Endothelial cell of umbilical vein (primary cell): ENCODE measurements at regions of chr1 and their contacts with region 1.

Region 1: DNA sequence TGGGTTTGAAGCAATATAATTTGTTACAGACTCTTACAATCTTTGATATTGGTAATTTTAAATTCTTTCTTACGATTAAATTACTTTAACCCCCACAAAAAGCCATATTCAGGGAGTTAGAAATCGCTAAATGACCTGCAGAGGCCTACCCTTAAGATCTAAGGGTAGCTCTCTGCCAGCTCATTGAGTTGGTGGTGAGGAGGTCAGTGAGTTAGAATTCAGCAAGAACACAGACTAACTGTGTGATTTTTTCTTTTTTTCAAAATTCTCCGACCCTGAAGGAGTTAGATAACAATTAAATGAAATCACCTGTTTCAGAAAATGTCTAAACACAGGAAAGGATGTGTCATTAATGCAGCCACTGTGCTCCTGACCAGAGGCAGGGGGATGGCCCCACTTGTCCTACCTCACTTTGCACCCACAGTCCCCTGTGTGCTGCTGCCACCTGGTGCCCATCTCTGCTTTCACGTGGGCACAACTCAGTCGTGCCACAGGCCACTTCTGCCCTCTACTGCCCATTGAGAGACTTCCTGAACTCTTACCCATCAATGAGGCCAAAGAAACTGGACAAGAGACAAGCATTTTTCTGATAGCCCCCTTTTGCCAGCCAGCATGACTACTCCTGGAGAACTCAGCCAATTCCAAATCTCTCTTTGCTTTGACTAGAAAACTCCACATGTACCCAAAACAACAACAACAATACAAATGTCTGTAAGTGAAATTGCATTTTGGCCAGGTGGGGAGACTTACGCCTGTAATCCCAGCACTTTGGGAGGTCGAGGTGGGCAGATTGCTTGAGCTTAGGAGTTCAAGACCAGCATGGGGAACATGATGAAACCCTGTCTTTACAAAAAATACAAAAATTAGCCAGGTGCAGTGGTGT is 8.4 kb downstream of the CFAP45 start:
- DNase-seq: peak; percentile 95
- H3K4me3 ChIP-seq: no peak overlapping the region
- H3K27ac ChIP-seq: peak overlapping the region; percentile 27
- H3K4me1 ChIP-seq: peaks cover 21% of the 10 kb centered on the region
- H3K27me3 ChIP-seq: no peaks in the 10 kb centered on the region
- CTCF ChIP-seq: peak; percentile 97 to 99
- POLR2A ChIP-seq: no peak

Region 2: DNA sequence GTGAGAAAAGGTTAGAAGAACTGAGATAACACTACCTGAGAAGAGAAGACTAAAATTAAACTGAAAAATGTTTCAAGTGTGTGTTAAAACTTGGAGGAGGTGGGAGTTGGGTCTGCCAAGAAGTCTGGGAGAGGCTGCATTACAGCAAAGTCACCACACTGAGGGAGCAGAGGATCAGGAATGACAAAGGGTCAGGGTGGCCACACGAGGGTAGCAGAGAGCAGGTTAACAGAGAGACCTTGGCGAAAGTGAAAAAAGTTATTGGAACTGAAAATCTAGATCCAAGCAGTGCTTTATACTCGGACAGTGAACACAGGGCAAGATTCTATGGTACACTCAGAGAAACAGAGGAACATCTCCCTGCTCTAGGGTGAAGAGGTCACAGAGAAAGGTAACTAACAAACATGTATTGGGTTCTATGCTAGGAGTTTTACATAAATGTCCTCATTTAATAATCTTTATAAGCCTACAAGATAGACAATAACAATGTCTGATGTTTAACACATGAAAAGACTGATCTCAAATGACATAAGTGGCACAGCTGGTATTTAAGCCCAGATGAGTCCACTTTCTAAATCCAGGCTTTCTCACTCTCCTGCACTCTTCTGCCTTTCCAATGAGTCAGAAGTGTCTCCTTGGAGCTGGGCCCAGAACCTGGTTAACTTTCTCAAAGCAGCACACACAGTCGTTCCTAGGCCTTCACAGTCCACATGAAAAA is 730.4 kb before region 1 on chr1:
- CTCF ChIA-PET with region 1: interaction called, 85 read pairs
- POLR2A ChIA-PET with region 1: no interaction called
- dilution Hi-C with region 1: no loop called
- intact Hi-C with region 1: loop called (anchors 1 kb)
- DNase-seq: peak; percentile 86
- H3K4me3 ChIP-seq: no peak overlapping the region
- H3K27ac ChIP-seq: no peak overlapping the region
- H3K4me1 ChIP-seq: peaks cover 7% of the 10 kb centered on the region
- H3K27me3 ChIP-seq: peaks cover 5 to 10% of the 10 kb centered on the region in 2 experiments
- CTCF ChIP-seq: peak; percentile 96 to 99
- POLR2A ChIP-seq: peak; percentile 25

Region 3: GRCh38 chr1:159469921-159470533 is 421.5 kb before region 1 on chr1:
- CTCF ChIA-PET with region 1: no interaction called
- POLR2A ChIA-PET with region 1: no interaction called
- dilution Hi-C with region 1: no loop called
- intact Hi-C with region 1: loop called (anchors 2 kb)
- DNase-seq: peak; percentile 79
- H3K4me3 ChIP-seq: no peak overlapping the region
- H3K27ac ChIP-seq: peak overlapping the region; percentile 78
- H3K4me1 ChIP-seq: peaks cover 50% of the 10 kb centered on the region
- H3K27me3 ChIP-seq: no peaks in the 10 kb centered on the region
- CTCF ChIP-seq: no peak
- POLR2A ChIP-seq: peak; percentile 25

Region 4: DNA sequence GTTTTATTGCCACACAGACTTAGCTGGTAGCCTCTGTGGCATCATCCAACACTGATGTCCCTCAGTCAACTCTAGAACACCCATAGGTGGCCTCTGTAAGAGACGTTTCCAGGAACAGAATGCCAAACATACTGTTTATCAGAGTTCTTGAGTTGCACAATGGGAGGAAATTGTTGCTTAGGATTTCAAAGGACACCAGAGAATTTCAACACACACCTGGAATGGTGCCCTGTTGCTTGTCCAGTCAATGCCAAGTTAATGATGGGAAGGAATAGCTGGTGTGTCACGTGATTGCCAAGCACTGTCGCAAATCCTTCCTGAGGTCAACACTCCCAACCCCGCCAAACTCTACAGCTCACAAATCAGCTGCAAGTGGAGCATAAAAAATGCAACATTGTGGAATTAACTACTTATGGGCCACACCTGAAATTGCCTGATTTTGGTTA is 139.4 kb before region 1 on chr1:
- CTCF ChIA-PET with region 1: no interaction called
- POLR2A ChIA-PET with region 1: no interaction called
- dilution Hi-C with region 1: no loop called
- intact Hi-C with region 1: no loop called
- DNase-seq: peak; percentile 82
- H3K4me3 ChIP-seq: no peak overlapping the region
- H3K27ac ChIP-seq: no peak overlapping the region
- H3K4me1 ChIP-seq: peaks cover 6% of the 10 kb centered on the region
- H3K27me3 ChIP-seq: no peaks in the 10 kb centered on the region
- CTCF ChIP-seq: no peak
- POLR2A ChIP-seq: no peak

Region 5: GRCh38 chr1:159790237-159790917 is 101.1 kb before region 1 on chr1:
- CTCF ChIA-PET with region 1: interaction called, 623 read pairs
- POLR2A ChIA-PET with region 1: no interaction called
- dilution Hi-C with region 1: loop called (anchors 5 kb)
- intact Hi-C with region 1: no loop called
- DNase-seq: peak; percentile 57
- H3K4me3 ChIP-seq: no peak overlapping the region
- H3K27ac ChIP-seq: no peak overlapping the region
- H3K4me1 ChIP-seq: peaks cover 16% of the 10 kb centered on the region
- H3K27me3 ChIP-seq: no peaks in the 10 kb centered on the region
- CTCF ChIP-seq: peak; percentile 61 to 65
- POLR2A ChIP-seq: no peak

Region 6: DNA sequence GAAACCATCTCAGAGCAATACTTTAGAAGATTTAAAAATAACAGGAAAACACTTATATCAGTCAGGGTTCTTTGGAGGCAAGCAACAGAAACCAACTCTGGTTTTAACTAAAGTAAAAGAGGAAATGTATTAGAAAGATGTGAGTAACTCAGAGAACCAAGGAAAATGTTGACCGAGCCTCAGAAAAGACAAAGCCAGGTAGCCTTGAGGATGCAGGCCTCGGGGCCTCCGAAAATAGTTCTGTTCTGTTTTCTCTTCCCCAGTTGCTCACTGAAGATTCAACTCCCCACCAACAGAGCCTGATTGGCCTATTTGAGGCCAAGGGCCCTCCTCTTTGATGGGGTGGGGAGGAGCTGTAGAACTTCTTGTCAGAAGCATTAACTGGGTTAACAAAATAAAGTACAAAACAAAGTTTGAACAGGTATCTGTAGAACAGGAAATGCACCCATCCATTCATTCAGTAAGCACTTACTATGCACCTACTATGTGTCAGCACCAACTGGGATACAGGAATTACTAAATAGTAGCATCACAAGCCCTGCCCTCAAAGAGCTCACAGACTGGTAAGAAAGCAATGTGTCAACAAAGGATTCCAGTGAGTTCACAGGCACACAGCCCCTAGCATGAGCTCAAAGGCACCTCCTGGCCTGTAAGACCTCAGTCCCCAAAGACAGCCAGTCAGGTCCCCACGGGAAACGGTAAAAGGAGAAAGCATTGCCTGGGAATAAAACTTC is 52.2 kb before region 1 on chr1:
- CTCF ChIA-PET with region 1: interaction called, 57 read pairs
- POLR2A ChIA-PET with region 1: no interaction called
- dilution Hi-C with region 1: no loop called
- intact Hi-C with region 1: loop called (anchors 1 kb)
- DNase-seq: no peak
- H3K4me3 ChIP-seq: no peak overlapping the region
- H3K27ac ChIP-seq: no peak overlapping the region
- H3K4me1 ChIP-seq: no peaks in the 10 kb centered on the region
- H3K27me3 ChIP-seq: no peaks in the 10 kb centered on the region
- CTCF ChIP-seq: no peak
- POLR2A ChIP-seq: no peak

Region 7: DNA sequence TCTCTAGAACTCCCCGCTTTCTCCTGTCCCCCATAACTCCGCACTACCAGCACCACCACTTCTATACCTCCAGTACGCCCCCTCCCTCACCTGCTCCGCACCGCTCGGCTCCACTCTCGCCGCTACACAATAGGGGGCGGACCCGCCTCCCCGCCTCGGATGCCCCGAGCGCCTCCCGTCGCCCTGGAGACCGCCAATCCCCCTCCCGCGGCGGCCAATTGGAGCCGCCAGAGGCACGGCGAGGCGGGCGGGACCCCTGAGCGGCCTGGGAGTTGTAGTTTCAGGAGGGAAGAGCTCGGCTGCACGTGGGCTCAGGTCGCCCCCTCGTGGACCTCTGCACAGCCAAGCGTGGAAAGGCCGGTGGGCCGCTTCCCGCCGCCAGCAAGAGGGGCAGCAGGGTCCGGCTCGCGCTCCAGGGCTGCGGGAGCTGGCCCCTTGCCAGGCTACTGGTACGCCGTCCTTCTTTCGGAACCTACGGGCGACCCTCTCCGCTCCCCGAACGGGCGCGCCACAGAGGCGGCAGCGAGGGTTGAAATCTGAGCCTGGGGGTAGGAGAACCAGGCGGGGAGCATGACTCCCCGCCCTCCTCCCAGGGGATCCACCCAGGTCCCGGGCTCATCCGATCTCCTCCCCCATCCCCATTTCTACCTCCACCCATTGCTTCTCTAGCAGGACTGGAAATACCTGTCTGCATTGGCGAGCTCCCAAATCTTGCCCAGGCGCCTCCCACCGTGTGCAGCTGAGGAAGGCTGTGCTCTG is 54.1 kb after region 1 on chr1 and contains the start of gene IGSF9:
- CTCF ChIA-PET with region 1: interaction called, 12 read pairs
- POLR2A ChIA-PET with region 1: no interaction called
- dilution Hi-C with region 1: no loop called
- intact Hi-C with region 1: loop called (anchors 1 kb)
- DNase-seq: peak; percentile 85
- H3K4me3 ChIP-seq: peak within 1 kb of the TSS in 2 of 3 experiments; percentile 15 to 16
- H3K27ac ChIP-seq: no peak within 1 kb of the TSS
- H3K4me1 ChIP-seq: peaks cover 5% of the 10 kb centered on the region
- H3K27me3 ChIP-seq: peaks cover 22 to 36% of the 10 kb centered on the region in 2 experiments
- CTCF ChIP-seq: peak; percentile 47 to 72
- POLR2A ChIP-seq: no peak
- total RNA-seq, gene IGSF9: 0.15 and 0.16 TPM in 2 replicates